Activated CD8-positive, alpha-beta memory T cell treated with anti-CD3 and anti-CD28 coated beads, Interleukin-2, amount 10 ng/mL, durations not matched to agents 7 days and 5 days (primary cell): ENCODE measurements at regions of chr2 and their contacts with region 1.

Region 1: GRCh38 chr2:74198461-74199274 is at the start of gene MTHFD2:
- DNase-seq: peak; percentile 97
- ATAC-seq: peak; percentile 88
- H3K4me3 Mint-ChIP-seq: peak within 1 kb of the TSS; percentile 96
- H3K27ac Mint-ChIP-seq: peak within 1 kb of the TSS; percentile 100
- H3K4me1 Mint-ChIP-seq: peaks cover 45% of the 10 kb centered on the region
- H3K27me3 Mint-ChIP-seq: no peaks in the 10 kb centered on the region
- total RNA-seq, gene MTHFD2: 215 to 293 TPM

Region 2: DNA sequence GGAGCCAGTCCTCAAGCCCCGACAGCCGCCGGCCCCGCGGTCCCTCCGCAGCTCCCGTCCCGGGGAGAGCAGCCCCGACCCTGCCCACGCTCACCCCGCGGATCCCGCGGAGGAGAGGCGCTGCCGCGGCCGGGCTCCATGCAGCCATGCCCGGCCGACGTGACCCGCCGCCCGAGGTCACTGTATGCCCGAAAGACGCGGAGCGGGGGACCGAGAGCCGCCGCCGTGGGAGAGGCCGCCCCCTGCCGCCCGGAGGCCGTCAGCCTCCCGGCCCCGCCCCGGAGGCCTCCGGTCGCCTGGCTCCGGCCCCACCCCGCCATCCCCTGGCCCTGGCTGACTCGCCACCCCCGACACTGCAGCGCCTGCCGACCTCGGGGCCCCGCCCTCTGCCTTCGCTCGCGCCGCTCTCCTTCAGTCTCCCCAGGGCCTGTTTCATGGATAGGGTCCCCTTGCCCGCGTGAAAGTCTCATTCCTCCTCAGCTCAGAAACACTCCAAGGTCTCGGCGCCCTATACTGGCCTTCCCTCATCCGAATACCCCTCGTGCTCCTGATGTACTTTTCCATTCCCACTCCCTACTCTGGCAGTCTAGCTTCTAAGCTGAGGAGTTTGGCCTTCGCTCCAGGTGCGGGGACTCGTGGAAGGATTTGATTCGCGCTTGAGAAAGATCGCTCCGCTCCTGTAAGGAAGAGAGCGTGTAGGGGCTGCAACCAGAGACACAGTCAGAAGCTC is 50.8 kb before region 1 on chr2 and contains the start of gene BOLA3:
- CTCF ChIA-PET with region 1: interaction called, 12 read pairs
- DNase-seq: peak; percentile 92
- ATAC-seq: peak; percentile 98
- H3K4me3 Mint-ChIP-seq: no peak within 1 kb of the TSS
- H3K27ac Mint-ChIP-seq: no peak within 1 kb of the TSS
- H3K4me1 Mint-ChIP-seq: peaks cover 4% of the 10 kb centered on the region
- H3K27me3 Mint-ChIP-seq: no peaks in the 10 kb centered on the region
- total RNA-seq, gene BOLA3: 69.5 to 76.1 TPM

Region 3: DNA sequence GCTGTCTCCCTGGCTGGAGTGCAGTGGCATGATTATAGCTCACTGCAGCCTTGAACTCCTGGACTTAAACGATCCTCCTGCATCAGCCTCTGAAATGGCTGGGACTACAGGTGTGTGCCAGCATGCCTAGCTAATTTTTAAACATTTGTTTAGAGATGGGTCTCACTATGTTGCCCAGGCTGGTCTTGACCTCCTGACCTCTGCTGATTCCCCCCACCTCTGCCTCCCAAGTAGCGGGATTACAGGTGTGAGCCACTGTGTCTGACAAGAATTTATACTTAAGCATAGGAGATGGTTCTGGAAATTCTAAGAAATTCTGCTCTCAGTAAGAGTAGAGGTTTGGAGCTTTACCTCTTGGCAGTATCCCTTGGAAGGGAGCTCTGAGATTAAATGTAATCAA is 18.0 kb after region 1 on chr2:
- CTCF ChIA-PET with region 1: interaction called, 10 read pairs
- DNase-seq: no peak
- ATAC-seq: no peak
- H3K4me3 Mint-ChIP-seq: no peak overlapping the region
- H3K27ac Mint-ChIP-seq: no peak overlapping the region
- H3K4me1 Mint-ChIP-seq: peaks cover under 1% of the 10 kb centered on the region
- H3K27me3 Mint-ChIP-seq: no peaks in the 10 kb centered on the region